AG04450 (cell line): ENCODE measurements at regions of chr2 and their contacts with region 1.

Region 1: DNA sequence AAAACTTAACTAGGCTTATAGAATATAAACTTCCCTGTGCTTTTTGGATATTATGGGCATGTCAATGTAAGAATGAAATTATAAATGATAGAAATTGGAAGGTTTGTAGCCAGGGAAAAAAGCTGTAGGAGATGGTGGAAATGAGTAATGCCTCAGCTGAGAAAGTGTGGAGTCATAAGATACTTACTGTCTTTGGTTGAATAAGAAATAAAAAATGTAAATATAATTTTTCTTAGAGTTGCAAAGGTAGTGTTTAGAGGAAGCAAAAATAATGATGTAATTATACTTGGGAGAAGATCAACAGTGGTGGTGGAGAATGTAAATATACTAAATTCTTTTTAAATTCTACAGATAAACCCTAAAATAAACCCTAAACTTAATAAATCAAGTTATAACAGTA is 26.2 kb upstream of the RND3 start:
- DNase-seq: peak; percentile 68
- H3K4me3 ChIP-seq: no peak overlapping the region
- H3K27ac ChIP-seq: no peak overlapping the region
- H3K27me3 ChIP-seq: no peaks in the 10 kb centered on the region
- CTCF ChIP-seq: no peak

Region 2: GRCh38 chr2:150485114-150485870 is 28.4 kb before region 1 on chr2:
- CTCF ChIA-PET with region 1: no interaction called
- POLR2A ChIA-PET with region 1: interaction called, 10 read pairs
- DNase-seq: no peak
- H3K4me3 ChIP-seq: peak overlapping the region; percentile 94
- H3K27ac ChIP-seq: peak overlapping the region; percentile 96
- H3K27me3 ChIP-seq: no peaks in the 10 kb centered on the region
- CTCF ChIP-seq: peak; percentile 25